ENCODE measurements at regions of chr15 and their contacts with region 1.

Region 1: DNA sequence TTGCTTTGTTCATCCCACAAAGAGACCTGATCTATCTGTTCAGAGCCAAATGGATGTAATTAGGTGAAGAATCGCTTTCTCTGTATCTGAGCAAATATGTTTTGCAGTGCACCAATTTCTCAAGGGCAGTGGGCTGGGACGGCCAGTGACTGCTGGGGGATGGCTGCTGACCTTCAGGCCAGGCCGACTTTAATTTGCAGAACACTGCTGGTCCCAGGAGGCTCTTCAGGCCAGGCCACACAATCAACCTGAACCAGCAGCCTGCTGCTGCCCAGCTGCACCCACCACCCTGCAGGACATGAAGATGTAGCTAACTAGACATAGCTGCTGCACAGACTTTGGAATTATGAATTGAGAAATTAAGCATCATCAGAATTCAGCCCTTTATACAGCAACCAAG is 194.4 kb upstream of the ONECUT1 start:
- DNase-seq: no peak
- H3K4me3 ChIP-seq: no peak overlapping the region
- H3K27ac ChIP-seq: no peak overlapping the region
- H3K4me1 ChIP-seq: no peaks in the 10 kb centered on the region
- H3K27me3 ChIP-seq: no peaks in the 10 kb centered on the region
- CTCF ChIP-seq: no peak
- EP300 ChIP-seq: no peak
- POLR2A ChIP-seq: no peak

Region 2: DNA sequence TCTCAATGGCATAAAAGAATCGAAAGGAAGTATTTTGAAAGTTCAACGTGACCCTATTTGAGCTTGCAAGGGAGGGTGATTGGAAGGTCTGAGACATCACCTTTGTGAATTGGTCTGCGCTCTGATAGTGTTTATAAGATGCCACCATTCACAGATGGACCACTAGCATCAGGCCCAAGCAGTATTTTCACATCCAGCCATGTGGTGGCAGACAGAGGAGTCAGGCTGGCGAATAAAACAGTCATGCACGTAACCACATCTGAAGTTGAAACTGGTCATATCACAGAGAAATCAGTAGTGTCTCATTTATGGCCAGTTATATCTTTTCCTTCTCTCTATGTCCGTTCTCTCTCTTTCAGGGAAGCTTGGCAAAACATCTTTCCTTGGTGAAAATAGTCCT is 24.2 kb before region 1 on chr15:
- intact Hi-C with region 1: loop called in 1 of 4 experiments (anchors 1 kb)
- DNase-seq: no peak
- H3K4me3 ChIP-seq: no peak overlapping the region
- H3K27ac ChIP-seq: no peak overlapping the region
- H3K4me1 ChIP-seq: no peaks in the 10 kb centered on the region
- H3K27me3 ChIP-seq: no peaks in the 10 kb centered on the region
- CTCF ChIP-seq: no peak
- EP300 ChIP-seq: no peak
- POLR2A ChIP-seq: no peak

Region 3: GRCh38 chr15:53462651-53463050 is 478.1 kb after region 1 on chr15:
- intact Hi-C with region 1: no loop called
- DNase-seq: no peak
- H3K4me3 ChIP-seq: no peak overlapping the region
- H3K27ac ChIP-seq: no peak overlapping the region
- H3K4me1 ChIP-seq: no peaks in the 10 kb centered on the region
- H3K27me3 ChIP-seq: no peaks in the 10 kb centered on the region
- CTCF ChIP-seq: no peak
- EP300 ChIP-seq: no peak
- POLR2A ChIP-seq: no peak